ENCODE measurements at regions of chr13 and their contacts with region 1.

Region 1: GRCh38 chr13:51405176-51405575 is 47.7 kb downstream of the INTS6 start:
- DNase-seq: no peak
- H3K4me3 ChIP-seq: no peak overlapping the region
- H3K4me3 Mint-ChIP-seq: peak overlapping the region in 1 of 8 donors; percentile 49
- H3K27ac ChIP-seq: no peak overlapping the region
- H3K27ac Mint-ChIP-seq: peak overlapping the region in 2 of 7 donors; percentile 49 to 61
- H3K4me1 ChIP-seq: peaks cover 28% of the 10 kb centered on the region
- H3K4me1 Mint-ChIP-seq: peaks cover 47 to 76% (median 55%) of the 10 kb centered on the region in 4 donors
- H3K27me3 ChIP-seq: no peaks in the 10 kb centered on the region
- H3K27me3 Mint-ChIP-seq: no peaks in the 10 kb centered on the region

Region 2: DNA sequence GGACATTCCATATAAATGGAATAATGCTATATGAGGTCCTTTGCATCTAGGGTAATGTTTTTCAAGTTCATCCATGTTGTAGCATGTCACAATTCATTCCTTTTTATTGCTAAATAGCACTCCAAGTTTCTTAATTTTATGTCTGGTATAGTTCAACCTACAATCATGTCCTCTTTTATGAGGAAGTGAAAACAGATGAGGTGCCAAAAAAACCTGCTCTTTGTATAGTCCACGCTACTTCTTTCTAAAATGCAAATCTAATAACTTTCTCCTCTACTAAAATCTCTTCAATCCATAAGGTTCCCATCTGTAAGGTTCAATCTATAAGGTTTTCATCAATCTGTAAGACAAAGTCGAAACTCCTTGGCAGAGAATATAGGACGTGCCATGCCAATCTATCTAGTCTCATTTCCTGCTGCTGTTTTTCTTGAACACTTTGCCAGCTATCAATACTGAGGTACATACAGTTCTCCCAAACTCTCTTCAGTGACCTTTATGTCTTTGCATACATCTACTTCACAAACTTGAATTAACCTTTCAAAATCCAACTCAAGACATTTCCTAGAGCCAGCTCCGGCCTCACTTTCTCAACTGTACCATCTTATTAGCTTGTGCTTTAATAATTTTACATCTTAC is 13.9 kb after region 1 on chr13:
- CTCF ChIA-PET with region 1: interaction called, 3 read pairs
- POLR2A ChIA-PET with region 1: no interaction called
- intact Hi-C with region 1: loop called (anchors 2 kb)
- DNase-seq: no peak
- H3K4me3 ChIP-seq: no peak overlapping the region
- H3K4me3 Mint-ChIP-seq: peak overlapping the region in 6 of 8 donors; percentile 5 to 55 (median 20)
- H3K27ac ChIP-seq: no peak overlapping the region
- H3K27ac Mint-ChIP-seq: peak overlapping the region in 6 of 7 donors; percentile 44 to 58 (median 57)
- H3K4me1 ChIP-seq: peaks cover 47% of the 10 kb centered on the region
- H3K4me1 Mint-ChIP-seq: peaks cover 51 to 74% (median 58%) of the 10 kb centered on the region in 4 donors
- H3K27me3 ChIP-seq: no peaks in the 10 kb centered on the region
- H3K27me3 Mint-ChIP-seq: no peaks in the 10 kb centered on the region

Measured in CD4-positive, alpha-beta memory T cell (primary cell).